Activated T-helper 2 cell treated with anti-CD3 and anti-CD28 coated beads, Interferon-gamma antibody, Interleukin-2, Interleukin-4, amounts not matched to agents 10 μg/mL and 5 μg/mL and 100 μg/mL, durations not matched to agents 14 hours and 24 hours and 36 hours (primary cell): ENCODE measurements at regions of chr12 and their contacts with region 1.

Region 1: DNA sequence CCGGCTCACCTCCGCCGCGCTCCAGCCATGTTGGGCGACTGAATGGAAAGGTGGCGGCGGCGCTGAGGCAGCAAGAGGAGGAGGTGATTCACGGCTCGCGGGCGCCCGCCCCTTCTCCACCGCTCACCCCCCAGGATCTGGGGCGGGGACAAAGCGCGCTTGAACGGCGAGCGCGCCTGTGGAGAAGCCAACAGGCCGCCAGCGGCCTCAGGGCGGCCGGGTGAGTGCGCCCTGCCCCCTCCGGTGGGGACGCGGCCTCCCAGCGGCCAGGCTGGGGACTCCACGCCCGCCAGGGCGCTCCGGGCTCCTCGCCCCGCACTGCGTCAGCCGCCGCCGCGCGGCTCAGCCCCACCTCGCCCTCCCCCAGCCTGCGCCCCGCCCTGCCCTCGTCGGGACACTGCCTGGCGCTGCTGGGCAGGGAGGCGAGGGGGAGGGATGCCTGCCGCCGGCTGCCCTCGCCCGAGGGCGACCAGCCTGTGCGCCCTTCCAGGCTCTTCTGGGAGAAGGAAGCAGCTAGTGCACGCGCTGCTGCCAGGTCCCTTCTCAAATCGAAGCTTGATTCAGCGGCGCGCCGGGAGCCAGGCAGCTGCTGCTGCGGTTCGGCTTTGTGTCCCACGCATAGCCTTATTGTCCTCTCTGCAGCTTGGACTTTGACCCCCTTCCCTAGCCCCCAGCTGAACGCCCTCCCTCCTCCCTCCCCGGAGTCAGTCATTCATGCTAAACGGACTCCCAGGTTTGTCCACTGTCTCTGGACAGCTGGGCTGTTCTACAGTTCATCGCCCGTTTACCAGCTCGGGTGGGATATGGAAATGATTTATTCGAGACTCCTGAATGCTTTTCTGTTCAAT is at the start of gene KIF21A:
- DNase-seq: peak; percentile 86
- H3K4me3 Mint-ChIP-seq: peak within 1 kb of the TSS; percentile 90
- H3K27ac Mint-ChIP-seq: peak within 1 kb of the TSS; percentile 81
- H3K4me1 Mint-ChIP-seq: peaks cover 25% of the 10 kb centered on the region
- H3K27me3 Mint-ChIP-seq: peaks cover 13% of the 10 kb centered on the region
- total RNA-seq, gene KIF21A: 35.0 and 35.6 TPM in 2 replicates

Region 2: DNA sequence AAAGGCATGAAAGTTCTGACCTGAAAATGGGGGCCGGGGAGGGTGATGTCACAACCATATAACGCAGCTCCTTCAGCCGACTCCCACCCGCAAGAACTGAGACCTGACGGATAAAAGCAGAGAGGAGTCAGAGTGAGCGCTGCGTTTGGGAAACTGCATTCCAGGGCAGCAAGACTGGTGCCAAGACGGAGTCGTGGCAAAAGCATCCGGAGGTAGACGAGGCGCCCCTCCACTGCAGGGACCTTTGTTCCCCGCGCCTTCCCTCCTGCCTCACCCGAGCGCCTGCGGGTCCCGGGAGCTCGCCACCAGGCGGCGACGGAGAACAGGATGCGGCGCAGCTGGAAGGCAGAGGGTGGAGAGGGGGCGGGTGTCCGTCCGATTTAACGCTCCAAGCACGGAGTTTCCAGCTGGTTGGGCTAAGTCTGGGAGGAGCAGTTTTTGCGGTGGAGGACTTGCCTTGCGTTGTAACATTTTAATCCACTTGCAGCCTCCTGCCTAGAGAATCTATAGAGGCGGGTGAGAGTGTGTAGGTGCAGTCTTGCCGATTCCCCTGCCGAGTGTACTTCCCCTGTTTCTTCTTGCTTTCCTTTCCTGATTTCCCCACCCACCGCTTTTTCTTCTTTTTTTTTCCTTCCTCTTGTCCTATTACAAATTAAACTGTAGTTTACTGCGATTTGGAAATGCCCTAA is 536.7 kb before region 1 on chr12:
- intact Hi-C with region 1: loop called (anchors 5 kb)
- DNase-seq: peak; percentile 63
- H3K4me3 Mint-ChIP-seq: peak overlapping the region; percentile 89
- H3K27ac Mint-ChIP-seq: peak overlapping the region; percentile 87
- H3K4me1 Mint-ChIP-seq: peaks cover 30% of the 10 kb centered on the region
- H3K27me3 Mint-ChIP-seq: peaks cover 19% of the 10 kb centered on the region

Region 3: GRCh38 chr12:39341179-39341578 is 102.1 kb before region 1 on chr12:
- intact Hi-C with region 1: loop called (anchors 2 kb)
- DNase-seq: no peak
- H3K4me3 Mint-ChIP-seq: no peak overlapping the region
- H3K27ac Mint-ChIP-seq: peak overlapping the region; percentile 48
- H3K4me1 Mint-ChIP-seq: peaks cover 17% of the 10 kb centered on the region
- H3K27me3 Mint-ChIP-seq: no peaks in the 10 kb centered on the region

Region 4: DNA sequence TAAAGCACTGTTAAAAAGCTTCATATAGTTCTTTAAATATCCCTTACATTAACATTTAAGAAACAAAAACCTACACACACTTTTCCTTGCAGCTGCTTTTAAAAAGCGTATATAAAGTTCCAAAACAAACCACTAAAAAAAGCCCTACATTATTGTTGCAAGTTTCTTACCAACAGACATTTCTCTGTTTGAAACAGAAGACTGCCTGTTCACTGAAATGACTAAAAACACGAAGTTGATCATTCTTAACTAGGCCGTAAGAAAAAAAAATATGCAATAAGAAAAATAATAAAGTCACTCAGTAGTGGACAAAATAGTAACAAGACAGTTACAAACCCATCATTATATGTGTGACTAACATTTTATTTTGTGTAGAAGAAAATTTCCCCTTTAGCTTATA is 37.7 kb before region 1 on chr12:
- intact Hi-C with region 1: loop called (anchors 5 kb)
- DNase-seq: no peak
- H3K4me3 Mint-ChIP-seq: no peak overlapping the region
- H3K27ac Mint-ChIP-seq: no peak overlapping the region
- H3K4me1 Mint-ChIP-seq: peaks cover 25% of the 10 kb centered on the region
- H3K27me3 Mint-ChIP-seq: no peaks in the 10 kb centered on the region

Region 5: DNA sequence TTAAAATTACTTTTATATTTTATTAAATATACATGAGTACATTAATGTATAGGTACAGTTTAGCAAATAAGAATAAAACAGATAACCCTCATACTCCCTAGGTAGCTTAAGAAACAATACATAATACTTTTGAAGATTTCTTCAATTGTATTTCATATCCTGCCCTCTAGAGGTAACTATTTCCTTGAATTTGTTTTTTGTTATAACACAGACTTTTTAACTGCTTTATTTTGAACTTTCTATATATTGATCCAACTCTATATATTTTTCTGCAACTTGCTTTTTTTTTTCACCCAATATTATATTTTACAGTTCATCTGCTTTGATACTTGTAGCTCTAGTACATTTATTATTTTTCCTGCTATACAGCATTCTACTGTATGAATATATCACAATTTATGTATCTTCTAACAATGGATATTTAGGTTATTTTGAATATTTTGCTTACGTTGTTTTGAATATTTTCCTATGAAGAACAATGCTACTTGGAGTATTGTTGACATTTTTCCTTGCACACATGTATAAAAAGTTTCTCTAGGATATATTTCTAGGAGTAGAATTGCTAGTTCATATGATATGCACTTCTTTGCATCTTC is 249.1 kb after region 1 on chr12:
- intact Hi-C with region 1: loop called (anchors 5 kb)
- DNase-seq: no peak
- H3K4me3 Mint-ChIP-seq: no peak overlapping the region
- H3K27ac Mint-ChIP-seq: no peak overlapping the region
- H3K4me1 Mint-ChIP-seq: peaks cover 3% of the 10 kb centered on the region
- H3K27me3 Mint-ChIP-seq: peaks cover 6% of the 10 kb centered on the region

Region 6: DNA sequence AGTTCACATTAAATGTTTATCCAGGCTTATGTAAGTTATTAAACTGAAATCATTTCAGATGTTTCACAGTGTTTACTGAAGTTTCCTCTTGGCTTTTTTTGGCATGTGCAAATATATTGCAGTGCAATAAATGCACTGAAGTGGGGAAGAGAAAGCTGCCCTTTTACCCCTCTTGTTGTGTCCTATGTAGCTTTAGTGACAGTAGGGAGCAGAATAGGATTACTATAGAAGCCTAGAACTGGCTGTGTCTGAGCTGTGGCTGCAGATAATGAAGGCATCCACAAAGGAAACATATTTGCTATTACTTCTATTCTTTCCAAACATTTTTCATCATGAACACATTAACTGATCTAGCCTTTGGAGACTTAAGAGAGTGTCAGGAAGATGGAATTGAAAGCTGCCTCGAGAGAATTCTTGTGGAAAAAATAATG is 1224.8 kb after region 1 on chr12:
- intact Hi-C with region 1: no loop called
- DNase-seq: no peak
- H3K4me3 Mint-ChIP-seq: no peak overlapping the region
- H3K27ac Mint-ChIP-seq: no peak overlapping the region
- H3K4me1 Mint-ChIP-seq: no peaks in the 10 kb centered on the region
- H3K27me3 Mint-ChIP-seq: no peaks in the 10 kb centered on the region